Ascending aorta (tissue), 2 donors: ENCODE measurements at regions of chr3 and their contacts with region 1.

Region 1: DNA sequence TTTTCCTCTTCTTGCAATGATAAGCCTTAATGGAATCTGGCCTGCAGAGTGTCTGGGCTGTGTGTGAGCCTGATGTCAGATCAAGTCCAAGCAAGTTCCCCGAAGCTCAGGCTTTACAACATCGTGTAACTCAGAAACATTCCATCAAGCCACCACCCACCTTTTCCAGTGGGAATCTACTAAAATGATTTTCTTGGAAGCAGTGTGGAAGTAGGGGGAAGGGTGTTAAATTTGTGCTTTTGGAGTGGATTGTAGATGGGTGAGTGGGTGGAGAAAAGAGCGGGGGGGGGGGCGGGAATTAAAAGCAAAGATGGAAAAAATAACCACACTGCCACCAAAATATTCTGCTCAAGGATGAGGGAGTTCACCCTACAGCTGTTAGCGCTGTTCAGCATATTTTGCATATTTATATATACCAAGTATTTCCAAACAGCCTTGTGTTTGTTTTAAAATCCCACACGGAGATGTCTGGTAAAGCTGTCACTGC is 53.6 kb downstream of the VGLL3 start:
- DNase-seq: peak in 1 of 2 donors; percentile 81
- H3K4me3 ChIP-seq: no peak overlapping the region
- H3K27ac ChIP-seq: peak overlapping the region; percentile 20 to 64
- H3K4me1 ChIP-seq: peaks cover 0 to 13% of the 10 kb centered on the region in 2 donors
- H3K27me3 ChIP-seq: no peaks in the 10 kb centered on the region
- CTCF ChIP-seq: no peak

Region 2: DNA sequence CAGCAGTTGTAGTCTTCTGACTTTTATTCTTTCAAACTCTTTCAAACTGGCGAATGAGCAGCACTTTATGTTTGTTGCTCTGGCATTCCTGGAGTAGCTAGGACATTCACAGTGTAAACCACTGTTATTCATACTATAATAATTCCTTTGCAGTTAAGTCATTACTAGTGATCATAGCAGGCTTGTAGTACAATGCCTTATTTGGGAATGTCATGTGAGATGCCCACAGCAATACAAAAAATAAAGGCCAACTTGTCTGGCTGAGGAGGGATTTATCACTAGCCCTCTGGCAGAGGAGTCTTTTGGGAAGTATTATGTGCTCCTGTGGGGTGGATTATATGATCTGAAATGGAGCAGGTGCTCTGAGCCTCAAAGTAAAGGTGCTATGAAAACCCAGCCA is 143.6 kb before region 1 on chr3:
- intact Hi-C with region 1: loop called (anchors 5 kb)
- DNase-seq: no peak
- H3K4me3 ChIP-seq: peak overlapping the region in 1 of 2 donors; percentile 39
- H3K27ac ChIP-seq: peak overlapping the region; percentile 88 to 89
- H3K4me1 ChIP-seq: peaks cover 0 to 15% of the 10 kb centered on the region in 2 donors
- H3K27me3 ChIP-seq: no peaks in the 10 kb centered on the region
- CTCF ChIP-seq: no peak

Region 3: GRCh38 chr3:87082796-87083440 is 145.6 kb after region 1 on chr3:
- intact Hi-C with region 1: no loop called
- DNase-seq: no peak
- H3K4me3 ChIP-seq: no peak overlapping the region
- H3K27ac ChIP-seq: no peak overlapping the region
- H3K4me1 ChIP-seq: no peaks in the 10 kb centered on the region
- H3K27me3 ChIP-seq: no peaks in the 10 kb centered on the region
- CTCF ChIP-seq: peak; percentile 48 to 69 (median 66)